ENCODE measurements at regions of chr14 and their contacts with region 1.

Region 1: DNA sequence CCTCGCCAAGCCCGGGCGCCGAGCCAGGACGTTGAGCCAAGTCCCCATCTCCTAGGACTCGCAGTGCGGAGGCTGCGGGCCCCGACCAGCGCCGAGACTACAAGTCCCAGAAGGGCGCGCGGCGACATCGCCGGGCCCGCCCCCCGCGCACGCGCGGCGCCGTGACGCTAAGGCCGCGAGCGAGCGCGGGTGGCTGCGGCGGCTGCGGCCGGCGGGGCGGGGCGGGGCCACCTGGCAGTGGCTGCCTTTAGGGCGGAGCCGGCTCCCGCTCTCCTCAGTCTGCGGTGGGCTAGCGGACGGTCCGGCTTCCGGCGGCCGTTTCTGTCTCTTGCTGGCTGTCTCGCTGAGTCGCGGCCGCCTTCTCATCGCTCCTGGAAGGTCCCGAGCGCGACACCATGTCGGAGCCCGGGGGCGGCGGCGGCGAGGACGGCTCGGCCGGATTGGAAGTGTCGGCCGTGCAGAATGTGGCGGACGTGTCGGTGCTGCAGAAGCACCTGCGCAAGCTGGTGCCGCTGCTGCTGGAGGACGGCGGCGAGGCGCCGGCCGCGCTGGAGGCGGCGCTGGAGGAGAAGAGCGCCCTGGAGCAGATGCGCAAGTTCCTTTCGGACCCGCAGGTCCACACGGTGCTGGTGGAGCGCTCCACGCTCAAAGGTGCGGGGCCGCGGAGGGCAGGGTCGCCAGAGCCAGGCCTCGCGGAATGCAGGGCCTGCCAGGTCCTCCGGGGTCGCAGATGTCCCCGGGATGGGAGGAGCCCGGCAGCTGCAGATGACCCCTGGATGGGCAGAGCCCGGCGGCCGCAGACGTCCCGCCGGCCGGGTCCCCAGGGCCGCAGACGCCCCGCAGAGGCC is at the start of gene DYNC1H1:
- DNase-seq: peak; percentile 86
- H3K4me3 Mint-ChIP-seq: peak within 1 kb of the TSS; percentile 83
- H3K27ac Mint-ChIP-seq: peak within 1 kb of the TSS; percentile 74
- H3K4me1 Mint-ChIP-seq: peaks cover 39% of the 10 kb centered on the region
- H3K27me3 Mint-ChIP-seq: no peaks in the 10 kb centered on the region
- CTCF ChIP-seq: no peak
- total RNA-seq, gene DYNC1H1: 704 and 715 TPM in 2 replicates

Region 2: GRCh38 chr14:101774006-101774795 is 190.3 kb before region 1 on chr14:
- CTCF ChIA-PET with region 1: interaction called, 7 read pairs
- POLR2A ChIA-PET with region 1: no interaction called
- intact Hi-C with region 1: loop called (anchors 2 kb)
- DNase-seq: no peak
- H3K4me3 Mint-ChIP-seq: no peak overlapping the region
- H3K27ac Mint-ChIP-seq: no peak overlapping the region
- H3K4me1 Mint-ChIP-seq: peaks cover 14% of the 10 kb centered on the region
- H3K27me3 Mint-ChIP-seq: no peaks in the 10 kb centered on the region
- CTCF ChIP-seq: no peak

Region 3: DNA sequence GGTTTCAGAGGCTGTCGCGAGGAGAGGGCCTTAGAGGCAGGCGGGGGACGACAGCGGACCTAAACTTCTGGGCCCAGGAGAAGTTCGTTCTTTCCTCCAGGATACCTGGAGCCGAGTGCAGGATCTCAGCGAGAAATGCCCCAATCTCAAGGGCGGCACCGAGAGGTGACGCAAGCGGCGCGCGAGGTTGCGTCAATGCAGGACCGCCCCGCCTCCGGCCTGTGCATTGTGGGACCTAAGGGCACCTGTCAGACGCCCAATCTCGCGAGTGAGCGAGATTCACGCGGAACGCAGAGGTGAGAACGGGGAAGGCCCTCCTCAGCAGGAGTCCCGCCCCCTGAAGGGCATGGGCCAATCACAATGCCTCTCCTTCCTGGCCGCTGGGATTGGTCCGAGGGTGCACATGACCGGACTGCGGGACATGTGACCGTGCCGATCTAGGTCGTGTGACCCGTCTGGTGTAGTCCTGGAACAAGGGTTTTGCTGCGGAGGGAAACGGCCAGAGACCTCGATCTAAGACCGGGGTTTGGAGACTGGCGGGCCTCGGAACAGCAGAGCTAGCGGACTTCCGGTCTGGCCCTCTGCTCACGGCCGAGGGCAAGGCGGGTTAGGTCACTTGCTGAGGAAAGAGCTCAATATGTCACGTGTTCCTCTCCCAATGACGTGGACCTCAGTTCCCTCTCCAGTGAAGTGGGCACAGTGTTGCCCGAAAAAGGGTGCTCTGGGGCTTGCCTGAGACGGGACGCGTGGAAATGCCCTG is 16.4 kb before region 1 on chr14:
- CTCF ChIA-PET with region 1: interaction called, 12 read pairs
- POLR2A ChIA-PET with region 1: interaction called, 29 read pairs
- intact Hi-C with region 1: no loop called
- DNase-seq: peak; percentile 100
- H3K4me3 Mint-ChIP-seq: peak overlapping the region; percentile 94
- H3K27ac Mint-ChIP-seq: peak overlapping the region; percentile 100
- H3K4me1 Mint-ChIP-seq: peaks cover 9% of the 10 kb centered on the region
- H3K27me3 Mint-ChIP-seq: peaks cover 2% of the 10 kb centered on the region
- CTCF ChIP-seq: no peak

Region 4: GRCh38 chr14:101992708-101993107 is 28.2 kb after region 1 on chr14:
- CTCF ChIA-PET with region 1: interaction called, 19 read pairs
- POLR2A ChIA-PET with region 1: interaction called, 3 read pairs
- intact Hi-C with region 1: no loop called
- DNase-seq: no peak
- H3K4me3 Mint-ChIP-seq: no peak overlapping the region
- H3K27ac Mint-ChIP-seq: peak overlapping the region; percentile 35
- H3K4me1 Mint-ChIP-seq: no peaks in the 10 kb centered on the region
- H3K27me3 Mint-ChIP-seq: no peaks in the 10 kb centered on the region
- CTCF ChIP-seq: no peak

Region 5: GRCh38 chr14:102016420-102017090 is 52.0 kb after region 1 on chr14:
- CTCF ChIA-PET with region 1: no interaction called
- POLR2A ChIA-PET with region 1: no interaction called
- intact Hi-C with region 1: no loop called
- DNase-seq: no peak
- H3K4me3 Mint-ChIP-seq: no peak overlapping the region
- H3K27ac Mint-ChIP-seq: no peak overlapping the region
- H3K4me1 Mint-ChIP-seq: no peaks in the 10 kb centered on the region
- H3K27me3 Mint-ChIP-seq: no peaks in the 10 kb centered on the region
- CTCF ChIP-seq: no peak

Region 6: DNA sequence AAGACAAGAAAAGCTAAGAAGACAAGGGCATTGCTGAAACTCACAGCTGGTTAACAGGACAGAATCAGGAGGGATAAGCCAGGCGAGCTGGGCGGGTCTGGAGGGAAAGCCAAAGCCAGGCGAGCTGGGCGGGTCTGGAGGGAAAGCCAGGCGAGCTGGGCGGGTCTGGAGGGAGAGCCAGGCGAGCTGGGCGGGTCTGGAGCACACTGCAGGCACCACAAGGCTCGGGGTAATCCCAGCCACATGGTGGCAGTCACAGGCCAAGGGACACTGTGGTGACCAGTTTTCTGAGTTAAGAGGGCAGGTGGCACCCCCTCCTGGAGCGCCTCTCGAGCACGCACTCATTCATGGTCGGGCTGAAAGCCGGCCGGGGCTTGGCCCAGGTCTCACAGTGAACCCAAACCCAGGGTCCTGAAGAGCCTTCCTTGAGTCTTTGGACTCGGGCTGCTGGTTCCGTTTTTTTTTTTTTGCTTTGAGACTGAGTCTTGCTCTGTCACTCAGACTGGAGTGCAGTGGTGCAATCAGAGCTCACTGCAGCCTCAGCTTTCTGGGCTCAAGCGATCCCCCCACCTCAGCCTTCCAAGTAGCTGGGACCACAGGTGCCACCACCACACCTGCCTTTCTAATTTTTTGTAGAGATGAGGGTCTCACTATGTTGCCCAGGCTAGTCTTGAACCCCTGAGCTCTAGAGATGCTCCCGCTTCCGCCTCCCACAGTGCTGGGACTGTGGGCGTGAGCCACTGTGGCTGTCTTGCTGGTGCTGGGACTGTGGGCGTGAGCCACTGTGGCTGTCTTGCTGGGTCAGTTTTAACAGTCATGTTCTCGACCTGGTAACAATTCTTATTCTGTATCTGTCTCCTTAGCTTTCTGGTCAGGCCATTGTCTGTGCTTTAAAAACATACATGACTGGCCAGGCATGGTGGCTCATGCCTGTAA is 82.1 kb after region 1 on chr14:
- CTCF ChIA-PET with region 1: interaction called, 10 read pairs
- POLR2A ChIA-PET with region 1: no interaction called
- intact Hi-C with region 1: no loop called
- DNase-seq: peak; percentile 35
- H3K4me3 Mint-ChIP-seq: no peak overlapping the region
- H3K27ac Mint-ChIP-seq: no peak overlapping the region
- H3K4me1 Mint-ChIP-seq: no peaks in the 10 kb centered on the region
- H3K27me3 Mint-ChIP-seq: no peaks in the 10 kb centered on the region
- CTCF ChIP-seq: no peak

Region 7: GRCh38 chr14:102086972-102087761 is 122.6 kb after region 1 on chr14 and contains the start of gene HSP90AA1:
- CTCF ChIA-PET with region 1: interaction called, 12 read pairs
- POLR2A ChIA-PET with region 1: interaction called, 22 read pairs
- intact Hi-C with region 1: no loop called
- DNase-seq: peak; percentile 90
- H3K4me3 Mint-ChIP-seq: peak within 1 kb of the TSS; percentile 63
- H3K27ac Mint-ChIP-seq: peak within 1 kb of the TSS; percentile 92
- H3K4me1 Mint-ChIP-seq: peaks cover 31% of the 10 kb centered on the region
- H3K27me3 Mint-ChIP-seq: no peaks in the 10 kb centered on the region
- CTCF ChIP-seq: no peak
- total RNA-seq, gene HSP90AA1: 277 and 296 TPM in 2 replicates

Region 8: GRCh38 chr14:102316743-102317563 is 352.4 kb after region 1 on chr14:
- CTCF ChIA-PET with region 1: interaction called, 4 read pairs
- POLR2A ChIA-PET with region 1: interaction called, 10 read pairs
- intact Hi-C with region 1: loop called (anchors 5 kb)
- DNase-seq: peak; percentile 90
- H3K4me3 Mint-ChIP-seq: peak overlapping the region; percentile 93
- H3K27ac Mint-ChIP-seq: peak overlapping the region; percentile 69
- H3K4me1 Mint-ChIP-seq: peaks cover 16% of the 10 kb centered on the region
- H3K27me3 Mint-ChIP-seq: no peaks in the 10 kb centered on the region
- CTCF ChIP-seq: peak; percentile 91

Region 9: DNA sequence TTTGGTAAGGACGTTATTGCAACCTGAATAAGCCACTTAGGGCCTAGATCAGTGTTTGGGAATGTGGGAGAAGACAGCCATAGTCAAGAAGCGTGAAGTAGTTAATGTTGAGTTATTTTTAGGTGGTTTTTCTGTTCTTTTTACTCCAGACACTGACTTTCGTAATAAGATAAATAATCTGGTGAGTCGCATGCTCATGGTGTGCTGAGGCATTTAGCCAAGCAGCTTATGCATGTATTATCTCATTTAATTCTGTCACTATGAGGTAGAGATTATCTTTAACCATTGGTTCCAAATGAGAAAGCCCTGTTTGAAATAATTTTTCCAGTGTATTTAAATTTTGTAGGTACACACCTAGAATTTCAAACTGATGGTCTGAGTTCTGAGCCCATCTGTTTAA is 695.3 kb after region 1 on chr14:
- CTCF ChIA-PET with region 1: no interaction called
- POLR2A ChIA-PET with region 1: no interaction called
- intact Hi-C with region 1: no loop called
- DNase-seq: peak; percentile 38
- H3K4me3 Mint-ChIP-seq: no peak overlapping the region
- H3K27ac Mint-ChIP-seq: no peak overlapping the region
- H3K4me1 Mint-ChIP-seq: peaks cover 30% of the 10 kb centered on the region
- H3K27me3 Mint-ChIP-seq: no peaks in the 10 kb centered on the region
- CTCF ChIP-seq: no peak